ENCODE measurements at regions of chr12 and their contacts with region 1.

Region 1: DNA sequence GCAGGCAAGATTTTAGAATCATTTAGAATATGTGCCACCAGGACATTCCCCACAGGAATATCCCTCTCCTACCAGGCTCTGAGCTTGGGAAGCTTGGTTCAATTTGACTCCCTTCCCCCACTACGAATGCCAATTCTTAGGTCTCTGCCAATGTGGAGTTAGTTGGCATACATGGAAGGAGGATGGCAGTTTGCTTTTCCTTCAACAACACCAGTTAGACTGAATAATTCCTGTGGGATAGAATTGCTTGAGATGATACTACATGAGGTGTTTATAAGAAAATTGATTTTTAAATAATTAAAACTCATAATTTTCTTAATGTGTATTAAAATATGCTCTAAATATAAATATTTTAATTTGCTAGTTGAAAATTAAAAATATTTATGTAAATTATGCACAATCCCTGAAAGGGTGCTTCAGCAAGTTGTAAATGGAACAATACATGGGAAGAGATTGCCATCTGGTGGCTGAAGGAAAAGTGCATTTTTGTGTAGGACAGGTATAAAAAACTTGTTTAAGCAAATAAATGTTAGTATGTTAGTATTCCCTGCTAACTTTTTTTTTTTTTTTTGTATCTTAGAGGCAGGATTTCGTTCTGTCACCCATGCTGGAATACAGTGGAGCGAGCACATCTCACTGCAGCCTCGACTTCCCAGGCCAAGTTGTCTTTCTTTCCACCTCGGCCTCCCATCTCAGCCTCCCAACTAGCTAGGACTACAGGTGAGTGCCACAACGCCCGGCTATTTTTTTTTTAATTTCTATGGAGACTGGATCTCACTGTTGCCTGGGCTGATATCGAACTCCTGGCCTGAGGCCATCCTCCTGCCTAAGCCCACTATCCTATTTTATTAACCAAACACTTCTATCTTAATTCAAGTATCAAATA is 25.8 kb upstream of the STRAP start:
- DNase-seq: no peak
- ATAC-seq: peak; percentile 26; the same call in 1 of the 2 replicates
- H3K4me3 Mint-ChIP-seq: no peak overlapping the region
- H3K27ac Mint-ChIP-seq: no peak overlapping the region
- H3K4me1 Mint-ChIP-seq: peaks cover 6% of the 10 kb centered on the region; the same call in 1 of the 2 replicates
- H3K27me3 Mint-ChIP-seq: no peaks in the 10 kb centered on the region
- CTCF ChIP-seq: peak; percentile 58

Region 2: GRCh38 chr12:15590180-15590826 is 266.0 kb before region 1 on chr12:
- CTCF ChIA-PET with region 1: interaction called, 38 read pairs
- POLR2A ChIA-PET with region 1: no interaction called
- DNase-seq: peak; percentile 16
- ATAC-seq: peak; percentile 93
- H3K4me3 Mint-ChIP-seq: peak overlapping the region; percentile 65
- H3K27ac Mint-ChIP-seq: no peak overlapping the region
- H3K4me1 Mint-ChIP-seq: peaks cover 17% of the 10 kb centered on the region
- H3K27me3 Mint-ChIP-seq: peaks cover 5% of the 10 kb centered on the region
- CTCF ChIP-seq: peak; percentile 56

Region 3: DNA sequence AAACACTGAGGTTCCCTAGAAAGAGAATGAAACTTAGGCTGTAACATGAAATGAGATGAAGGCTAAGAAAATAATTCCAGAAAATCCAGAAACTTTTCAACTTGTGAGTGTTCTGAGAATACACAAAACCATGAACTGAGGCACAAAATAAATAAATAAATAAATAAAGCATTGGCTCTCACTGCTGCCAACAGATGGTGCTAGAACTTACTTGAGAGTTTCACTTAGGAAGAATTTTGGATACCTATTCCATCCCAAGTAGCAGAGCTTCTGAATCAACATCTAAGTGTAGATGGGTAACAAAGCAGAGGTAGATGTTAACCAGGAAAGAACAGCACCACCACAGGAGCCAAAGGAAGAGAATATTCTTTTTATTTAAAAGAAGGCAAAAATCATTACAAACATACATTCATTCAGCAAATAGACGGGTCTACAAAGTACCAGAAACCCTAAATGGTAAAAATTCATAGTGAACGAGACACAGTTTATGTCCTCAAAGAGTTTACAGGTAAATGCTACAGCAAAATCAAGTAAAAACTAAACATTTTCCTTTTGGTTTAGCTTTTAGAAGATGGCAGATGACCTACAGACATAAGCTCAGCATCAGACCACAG is 83.8 kb before region 1 on chr12:
- CTCF ChIA-PET with region 1: interaction called, 12 read pairs
- POLR2A ChIA-PET with region 1: no interaction called
- DNase-seq: no peak
- ATAC-seq: peak; percentile 58
- H3K4me3 Mint-ChIP-seq: no peak overlapping the region
- H3K27ac Mint-ChIP-seq: no peak overlapping the region
- H3K4me1 Mint-ChIP-seq: peaks cover 16% of the 10 kb centered on the region
- H3K27me3 Mint-ChIP-seq: no peaks in the 10 kb centered on the region
- CTCF ChIP-seq: no peak

Region 4: GRCh38 chr12:15882118-15882971 is 26.0 kb after region 1 on chr12 and contains the start of gene STRAP:
- CTCF ChIA-PET with region 1: interaction called, 10 read pairs
- POLR2A ChIA-PET with region 1: no interaction called
- DNase-seq: peak; percentile 96
- ATAC-seq: peak; percentile 93
- H3K4me3 Mint-ChIP-seq: peak within 1 kb of the TSS; percentile 94
- H3K27ac Mint-ChIP-seq: peak within 1 kb of the TSS; percentile 98
- H3K4me1 Mint-ChIP-seq: peaks cover 31% of the 10 kb centered on the region
- H3K27me3 Mint-ChIP-seq: no peaks in the 10 kb centered on the region
- CTCF ChIP-seq: no peak
- total RNA-seq, gene STRAP: 196 to 221 TPM (median 201 TPM) in 3 replicates

Measured in WTC11 (cell line).